ENCODE measurements at regions of chr17 and their contacts with region 1.

Region 1: DNA sequence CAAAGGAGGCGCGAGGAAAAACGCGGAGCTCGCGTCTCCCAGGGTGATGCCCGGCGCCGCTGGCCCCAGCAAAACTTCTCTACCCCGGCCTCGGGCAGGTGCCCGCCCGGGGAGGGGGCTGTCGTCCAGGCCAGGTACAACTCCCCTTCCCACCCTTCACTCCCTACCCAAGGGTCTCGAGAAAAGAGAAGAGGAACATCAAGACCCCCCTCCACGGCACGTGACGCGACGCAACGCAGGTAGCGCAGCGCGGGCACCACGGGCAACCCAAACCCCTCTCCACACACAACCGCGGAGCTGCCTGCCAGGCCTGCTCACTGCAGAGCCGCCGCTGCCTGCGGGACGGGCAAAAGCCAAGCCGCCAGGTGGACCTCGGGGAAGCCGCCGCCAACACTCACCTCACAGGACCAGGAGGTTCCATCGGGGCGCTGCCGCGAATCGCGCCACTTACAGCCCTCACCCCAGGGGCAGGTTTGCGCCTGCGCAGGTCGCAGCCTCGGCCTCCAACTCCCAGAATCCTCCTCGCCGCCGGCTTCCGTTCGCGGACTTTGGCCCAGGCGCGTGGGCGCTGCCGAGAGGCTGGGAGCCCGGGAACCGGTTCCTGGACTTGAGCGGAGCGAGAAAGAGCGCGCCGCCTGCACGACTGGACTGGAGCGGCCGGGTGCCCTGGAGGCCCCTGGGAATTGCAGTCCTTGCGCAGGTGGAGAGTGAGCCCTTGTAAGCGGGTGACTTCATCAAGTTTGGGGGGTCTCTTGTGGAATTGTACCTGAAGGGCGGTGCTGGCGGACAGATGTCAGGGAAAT is at the start of gene ZNF232:
- DNase-seq: peak; percentile 91
- H3K4me3 Mint-ChIP-seq: peak within 1 kb of the TSS; percentile 86
- H3K27ac Mint-ChIP-seq: peak within 1 kb of the TSS; percentile 79
- H3K4me1 Mint-ChIP-seq: peaks cover 13% of the 10 kb centered on the region
- H3K27me3 Mint-ChIP-seq: peaks cover 6% of the 10 kb centered on the region
- total RNA-seq, gene ZNF232: 17.3 and 19.3 TPM in 2 replicates

Region 2: GRCh38 chr17:5078106-5079028 is 33.2 kb before region 1 on chr17 and contains the start of gene ZFP3:
- intact Hi-C with region 1: loop called (anchors 1 kb)
- DNase-seq: peak; percentile 72
- H3K4me3 Mint-ChIP-seq: peak within 1 kb of the TSS; percentile 81
- H3K27ac Mint-ChIP-seq: peak within 1 kb of the TSS; percentile 86
- H3K4me1 Mint-ChIP-seq: peaks cover 17% of the 10 kb centered on the region
- H3K27me3 Mint-ChIP-seq: peaks cover 2% of the 10 kb centered on the region
- total RNA-seq, gene ZFP3: 1.9 and 2.0 TPM in 2 replicates

Region 3: DNA sequence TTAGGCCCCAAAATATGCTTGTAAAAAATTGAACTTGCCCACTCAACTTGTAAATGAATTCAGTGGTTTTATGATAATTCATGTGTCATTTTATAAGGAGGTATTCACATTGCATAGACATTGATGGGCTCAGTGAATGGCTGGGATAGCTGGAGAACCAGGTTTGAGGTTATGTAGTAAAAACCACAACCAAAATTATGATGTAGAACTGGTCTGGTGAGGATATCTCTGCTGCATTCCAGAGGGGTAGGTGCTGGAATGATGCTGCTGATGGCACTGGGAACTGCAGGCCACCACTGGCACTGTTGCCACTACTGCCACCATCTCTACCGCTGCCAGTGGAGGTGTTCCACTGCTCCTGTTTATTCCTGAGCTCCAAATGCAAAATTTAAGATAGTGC is 149.0 kb after region 1 on chr17:
- intact Hi-C with region 1: no loop called
- DNase-seq: no peak
- H3K4me3 Mint-ChIP-seq: no peak overlapping the region
- H3K27ac Mint-ChIP-seq: no peak overlapping the region
- H3K4me1 Mint-ChIP-seq: no peaks in the 10 kb centered on the region
- H3K27me3 Mint-ChIP-seq: peaks cover 2% of the 10 kb centered on the region

Region 4: GRCh38 chr17:5281814-5282653 is 170.4 kb after region 1 on chr17 and contains the start of gene RABEP1:
- intact Hi-C with region 1: loop called (anchors 1 kb)
- DNase-seq: peak; percentile 92
- H3K4me3 Mint-ChIP-seq: peak within 1 kb of the TSS; percentile 90
- H3K27ac Mint-ChIP-seq: peak within 1 kb of the TSS; percentile 91
- H3K4me1 Mint-ChIP-seq: peaks cover 28% of the 10 kb centered on the region
- H3K27me3 Mint-ChIP-seq: peaks cover 3% of the 10 kb centered on the region
- total RNA-seq, gene RABEP1: 50.2 and 51.4 TPM in 2 replicates

Region 5: GRCh38 chr17:5438716-5439445 is 327.3 kb after region 1 on chr17 and contains the start of gene C1QBP:
- intact Hi-C with region 1: loop called (anchors 1 kb)
- DNase-seq: peak; percentile 89
- H3K4me3 Mint-ChIP-seq: peak within 1 kb of the TSS; percentile 94
- H3K27ac Mint-ChIP-seq: peak within 1 kb of the TSS; percentile 87
- H3K4me1 Mint-ChIP-seq: peaks cover 40% of the 10 kb centered on the region
- H3K27me3 Mint-ChIP-seq: no peaks in the 10 kb centered on the region
- total RNA-seq, gene C1QBP: 410 and 413 TPM in 2 replicates

Measured in activated T-helper 1 cell treated with anti-CD3 and anti-CD28 coated beads, Interleukin-12 subunit alpha, Interleukin-12 subunit beta, Interleukin-2, Interleukin-4 antibody, amounts not matched to agents 30 ng/mL and 10 ng/mL and 1 ng/mL, durations not matched to agents 14 hours and 24 hours and 36 hours (primary cell).